ENCODE measurements at regions of chr15 and their contacts with region 1.

Region 1: DNA sequence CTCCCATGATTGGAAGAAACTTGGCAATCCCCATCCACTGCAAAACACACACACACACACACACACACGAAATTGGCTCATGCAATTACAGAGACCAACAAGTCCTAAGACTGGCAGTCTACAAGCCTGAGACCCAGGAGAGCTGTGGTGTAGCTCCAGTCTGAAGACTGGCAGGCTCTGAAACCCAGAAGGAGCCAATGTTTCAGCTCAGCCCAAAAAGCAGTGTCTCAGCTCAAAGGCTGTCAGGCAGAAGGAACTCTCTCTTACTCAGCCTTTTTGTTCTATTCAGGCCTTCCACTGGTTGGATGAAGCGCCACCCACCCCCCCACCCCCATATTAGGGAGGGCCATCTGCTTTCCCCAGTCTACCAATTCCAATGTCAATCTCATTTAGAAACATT is 32.1 kb downstream of the MESD start:
- DNase-seq: no peak
- ATAC-seq: no peak
- H3K4me3 ChIP-seq: no peak overlapping the region
- H3K27ac ChIP-seq: no peak overlapping the region
- H3K4me1 ChIP-seq: 0 out of 2 replicates have a peak, but pooled peaks cover 3% of the 10 kb centered on the region
- H3K27me3 ChIP-seq: no peaks in the 10 kb centered on the region
- CTCF ChIP-seq: no peak

Region 2: DNA sequence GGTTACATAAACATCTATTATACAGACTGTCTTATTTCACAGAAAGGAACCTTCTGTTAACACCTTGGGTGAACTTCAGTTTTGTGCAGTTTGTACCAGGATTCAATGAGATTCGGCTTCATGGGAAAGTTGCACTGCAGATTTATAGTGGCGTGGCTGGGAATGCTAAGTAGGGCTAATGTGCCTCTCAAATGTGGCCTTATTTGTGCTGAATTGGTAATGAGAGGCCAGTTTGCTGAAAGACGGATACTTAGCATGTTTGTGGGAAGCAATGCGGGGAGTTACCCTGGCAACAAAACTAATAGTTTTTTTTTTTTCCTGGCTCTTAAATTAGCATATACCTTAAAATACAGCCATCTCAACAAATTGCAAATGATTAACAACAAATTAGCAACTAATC is 207.0 kb before region 1 on chr15:
- CTCF ChIA-PET with region 1: interaction called, 10 read pairs
- POLR2A ChIA-PET with region 1: no interaction called
- in situ Hi-C with region 1: no loop called
- intact Hi-C with region 1: no loop called
- DNase-seq: no peak
- ATAC-seq: no peak
- H3K4me3 ChIP-seq: no peak overlapping the region
- H3K27ac ChIP-seq: no peak overlapping the region
- H3K4me1 ChIP-seq: no peaks in the 10 kb centered on the region
- H3K27me3 ChIP-seq: no peaks in the 10 kb centered on the region
- CTCF ChIP-seq: no peak

Region 3: GRCh38 chr15:82692171-82692570 is 1734.6 kb after region 1 on chr15:
- CTCF ChIA-PET with region 1: no interaction called
- POLR2A ChIA-PET with region 1: no interaction called
- in situ Hi-C with region 1: no loop called
- intact Hi-C with region 1: loop called (anchors 5 kb)
- DNase-seq: no peak
- ATAC-seq: no peak
- H3K4me3 ChIP-seq: no peak overlapping the region
- H3K27ac ChIP-seq: no peak overlapping the region
- H3K4me1 ChIP-seq: no peaks in the 10 kb centered on the region
- H3K27me3 ChIP-seq: no peaks in the 10 kb centered on the region
- CTCF ChIP-seq: no peak